ENCODE measurements at regions of chr18 and their contacts with region 1.

Region 1: GRCh38 chr18:13159579-13159978 is 59.0 kb upstream of the LDLRAD4 start:
- DNase-seq: peak; percentile 86
- H3K4me3 Mint-ChIP-seq: no peak overlapping the region
- H3K27ac Mint-ChIP-seq: no peak overlapping the region
- H3K4me1 Mint-ChIP-seq: peaks cover 3% of the 10 kb centered on the region
- H3K27me3 Mint-ChIP-seq: peaks cover 9% of the 10 kb centered on the region

Region 2: DNA sequence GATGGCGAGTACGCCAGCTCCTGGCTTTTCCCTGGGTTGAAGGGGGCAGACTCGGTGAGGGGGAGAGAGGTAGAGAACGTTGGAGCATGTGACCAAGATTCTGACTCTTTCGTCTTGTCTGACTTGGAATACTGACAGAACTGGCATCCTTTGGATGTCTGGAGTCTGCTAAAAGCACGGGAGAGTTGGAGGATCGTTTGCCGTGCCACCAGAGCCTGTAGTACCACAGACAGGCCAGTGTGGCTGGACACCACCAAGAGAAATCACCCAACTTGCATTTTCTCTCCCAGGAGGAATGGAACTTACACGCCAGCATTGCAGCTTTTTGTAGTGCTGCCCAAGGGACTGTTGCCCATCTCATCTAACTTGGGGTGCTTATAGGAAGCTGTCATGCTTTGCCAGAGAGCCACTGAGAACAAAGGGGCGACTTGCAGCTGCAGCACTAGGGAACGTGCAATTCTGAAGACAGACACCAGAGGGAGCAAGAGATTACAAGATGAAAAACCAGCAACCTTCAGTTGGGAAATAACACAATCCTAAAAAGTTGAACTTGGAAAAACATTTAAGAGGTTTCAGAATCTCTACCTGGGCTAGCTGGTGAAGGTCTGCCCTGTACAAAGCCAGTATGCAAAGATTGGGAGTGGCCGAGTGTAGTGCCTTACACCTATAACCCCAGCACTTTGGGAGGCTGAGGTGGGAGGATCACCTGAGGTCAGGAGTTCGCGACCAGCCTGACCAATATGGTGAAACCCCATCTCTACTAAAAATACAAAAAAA is 432.6 kb before region 1 on chr18:
- intact Hi-C with region 1: loop called (anchors 5 kb)
- DNase-seq: peak; percentile 90
- H3K4me3 Mint-ChIP-seq: no peak overlapping the region
- H3K27ac Mint-ChIP-seq: no peak overlapping the region
- H3K4me1 Mint-ChIP-seq: peaks cover 3% of the 10 kb centered on the region
- H3K27me3 Mint-ChIP-seq: no peaks in the 10 kb centered on the region

Region 3: GRCh38 chr18:13003466-13003896 is 156.1 kb before region 1 on chr18:
- intact Hi-C with region 1: loop called (anchors 5 kb)
- DNase-seq: peak; percentile 68
- H3K4me3 Mint-ChIP-seq: no peak overlapping the region
- H3K27ac Mint-ChIP-seq: no peak overlapping the region
- H3K4me1 Mint-ChIP-seq: peaks cover 26% of the 10 kb centered on the region
- H3K27me3 Mint-ChIP-seq: no peaks in the 10 kb centered on the region

Region 4: GRCh38 chr18:13394801-13395200 is 235.2 kb after region 1 on chr18:
- intact Hi-C with region 1: no loop called
- DNase-seq: no peak
- H3K4me3 Mint-ChIP-seq: no peak overlapping the region
- H3K27ac Mint-ChIP-seq: no peak overlapping the region
- H3K4me1 Mint-ChIP-seq: peaks cover 4% of the 10 kb centered on the region
- H3K27me3 Mint-ChIP-seq: no peaks in the 10 kb centered on the region

Measured in activated CD4-positive, alpha-beta T cell treated with anti-CD3 and anti-CD28 coated beads, Interleukin-2, amount 10 ng/mL, durations not matched to agents 24 days and 14 days (primary cell).